ENCODE measurements at regions of chr6 and their contacts with region 1.

Region 1: DNA sequence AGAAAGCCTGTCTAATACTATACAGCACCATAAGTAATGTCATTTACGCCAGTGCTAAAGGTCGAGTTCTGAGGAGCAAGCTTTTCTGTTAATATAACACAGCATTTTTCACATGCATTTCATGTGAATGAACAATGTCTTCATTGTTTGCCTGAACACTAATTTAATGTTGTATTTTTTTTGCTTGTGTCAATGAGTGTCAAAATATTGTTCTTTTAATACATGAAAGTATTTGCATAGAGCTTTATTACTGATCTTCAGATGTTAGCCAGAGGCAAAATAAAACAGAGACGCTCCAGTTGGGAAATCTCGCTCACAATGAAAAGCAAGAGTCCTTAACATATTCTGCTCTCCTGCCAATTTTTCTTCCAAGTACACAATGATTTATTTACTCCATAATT is 151.8 kb downstream of the FOXC1 start:
- DNase-seq: no peak
- H3K4me3 Mint-ChIP-seq: peak overlapping the region; percentile 62
- H3K27ac Mint-ChIP-seq: peak overlapping the region; percentile 98
- H3K4me1 Mint-ChIP-seq: peaks cover 38% of the 10 kb centered on the region
- H3K27me3 Mint-ChIP-seq: no peaks in the 10 kb centered on the region
- CTCF ChIP-seq: no peak

Region 2: DNA sequence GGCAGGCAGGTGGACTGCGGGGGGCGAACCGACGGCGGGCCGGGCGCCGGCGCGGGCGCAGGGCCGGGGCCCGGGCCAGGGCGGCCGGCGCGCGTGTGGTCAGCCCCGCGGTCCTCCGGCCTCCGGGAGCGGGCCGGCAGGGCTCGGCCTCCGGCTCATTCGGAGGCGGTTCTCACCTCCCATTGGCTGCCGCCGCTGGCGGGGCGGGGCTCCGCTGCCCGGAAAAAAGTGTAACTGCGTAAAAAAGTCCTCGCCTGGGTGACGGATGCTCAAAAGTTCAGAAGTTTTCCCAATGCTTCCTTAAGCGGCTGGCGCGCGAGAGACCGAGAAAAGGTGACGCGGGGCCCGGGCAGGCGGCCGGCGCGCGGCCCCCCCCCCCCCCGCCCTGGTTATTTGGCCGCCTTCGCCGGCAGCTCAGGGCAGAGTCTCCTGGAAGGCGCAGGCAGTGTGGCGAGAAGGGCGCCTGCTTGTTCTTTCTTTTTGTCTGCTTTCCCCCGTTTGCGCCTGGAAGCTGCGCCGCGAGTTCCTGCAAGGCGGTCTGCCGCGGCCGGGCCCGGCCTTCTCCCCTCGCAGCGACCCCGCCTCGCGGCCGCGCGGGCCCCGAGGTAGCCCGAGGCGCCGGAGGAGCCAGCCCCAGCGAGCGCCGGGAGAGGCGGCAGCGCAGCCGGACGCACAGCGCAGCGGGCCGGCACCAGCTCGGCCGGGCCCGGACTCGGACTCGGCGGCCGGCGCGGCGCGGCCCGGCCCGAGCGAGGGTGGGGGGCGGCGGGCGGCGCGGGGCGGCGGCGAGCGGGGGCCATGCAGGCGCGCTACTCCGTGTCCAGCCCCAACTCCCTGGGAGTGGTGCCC is 151.6 kb before region 1 on chr6 and contains the start of gene FOXC1:
- CTCF ChIA-PET with region 1: no interaction called
- intact Hi-C with region 1: loop called (anchors 5 kb)
- DNase-seq: peak; percentile 90
- H3K4me3 Mint-ChIP-seq: peak within 1 kb of the TSS; percentile 80
- H3K27ac Mint-ChIP-seq: peak within 1 kb of the TSS; percentile 50
- H3K4me1 Mint-ChIP-seq: peaks cover 8% of the 10 kb centered on the region
- H3K27me3 Mint-ChIP-seq: peaks cover 12% of the 10 kb centered on the region
- CTCF ChIP-seq: no peak
- total RNA-seq, gene FOXC1: 12.3 and 16.5 TPM in 2 replicates

Region 3: DNA sequence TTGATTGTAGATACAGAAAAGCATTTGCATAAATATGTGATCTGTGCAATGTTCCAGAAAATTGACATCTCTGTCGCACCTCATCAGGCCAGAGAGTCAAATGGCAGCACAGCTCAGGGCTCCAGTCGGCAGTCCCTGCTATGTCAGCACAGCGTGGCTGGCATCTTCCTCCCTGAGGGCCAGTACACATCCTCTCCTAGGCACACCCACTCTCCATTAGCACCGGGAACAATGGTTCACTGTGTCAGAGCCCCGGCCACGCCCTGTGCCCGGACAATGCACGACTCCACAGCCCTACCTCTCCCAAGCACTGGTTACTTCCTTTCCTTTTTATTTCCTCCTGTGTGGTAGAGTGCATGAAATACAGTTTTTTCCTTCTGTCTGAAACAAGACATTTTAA is 36.9 kb before region 1 on chr6:
- CTCF ChIA-PET with region 1: no interaction called
- intact Hi-C with region 1: loop called (anchors 2 kb)
- DNase-seq: peak; percentile 89
- H3K4me3 Mint-ChIP-seq: peak overlapping the region; percentile 43
- H3K27ac Mint-ChIP-seq: peak overlapping the region; percentile 74
- H3K4me1 Mint-ChIP-seq: peaks cover 37% of the 10 kb centered on the region
- H3K27me3 Mint-ChIP-seq: no peaks in the 10 kb centered on the region
- CTCF ChIP-seq: no peak

Measured in Calu3 (cell line).